ENCODE measurements at regions of chr19 and their contacts with region 1.

Region 1: GRCh38 chr19:48110350-48110966 is at the start of gene PLA2G4C:
- DNase-seq: peak; percentile 95 to 97
- ATAC-seq: peak; percentile 93
- H3K4me3 ChIP-seq: peak within 1 kb of the TSS; percentile 54 to 56
- H3K27ac ChIP-seq: peak within 1 kb of the TSS in 1 of 2 donors; percentile 97
- H3K4me1 ChIP-seq: no peaks in the 10 kb centered on the region
- H3K27me3 ChIP-seq: no peaks in the 10 kb centered on the region
- total RNA-seq, gene PLA2G4C: 19.8 to 60.1 TPM

Region 2: DNA sequence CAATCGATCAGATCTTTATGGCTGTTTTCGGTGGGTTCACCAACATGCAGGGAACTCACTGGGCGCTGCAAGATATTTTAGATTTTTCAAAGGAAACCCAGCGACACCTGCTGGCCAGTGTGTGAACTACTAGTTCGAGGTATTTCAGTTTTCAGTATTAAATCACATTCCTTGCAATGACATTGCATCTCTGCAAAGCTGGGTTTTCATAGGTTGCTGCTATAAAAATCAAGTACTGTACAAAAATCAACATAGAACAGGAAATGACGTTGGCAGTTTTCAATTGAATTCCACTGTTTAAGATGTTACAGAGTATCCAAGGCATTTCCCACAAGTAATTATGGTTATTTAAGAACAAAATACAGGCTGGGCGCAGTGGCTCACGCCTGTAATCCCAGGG is 42.1 kb after region 1 on chr19:
- intact Hi-C with region 1: loop called (anchors 1 to 2 kb)
- DNase-seq: peak; percentile 63 to 83
- ATAC-seq: peak; percentile 71
- H3K4me3 ChIP-seq: no peak overlapping the region
- H3K27ac ChIP-seq: no peak overlapping the region
- H3K4me1 ChIP-seq: no peaks in the 10 kb centered on the region
- H3K27me3 ChIP-seq: no peaks in the 10 kb centered on the region